H1 (cell line): ENCODE measurements at regions of chr5 and their contacts with region 1.

Region 1: DNA sequence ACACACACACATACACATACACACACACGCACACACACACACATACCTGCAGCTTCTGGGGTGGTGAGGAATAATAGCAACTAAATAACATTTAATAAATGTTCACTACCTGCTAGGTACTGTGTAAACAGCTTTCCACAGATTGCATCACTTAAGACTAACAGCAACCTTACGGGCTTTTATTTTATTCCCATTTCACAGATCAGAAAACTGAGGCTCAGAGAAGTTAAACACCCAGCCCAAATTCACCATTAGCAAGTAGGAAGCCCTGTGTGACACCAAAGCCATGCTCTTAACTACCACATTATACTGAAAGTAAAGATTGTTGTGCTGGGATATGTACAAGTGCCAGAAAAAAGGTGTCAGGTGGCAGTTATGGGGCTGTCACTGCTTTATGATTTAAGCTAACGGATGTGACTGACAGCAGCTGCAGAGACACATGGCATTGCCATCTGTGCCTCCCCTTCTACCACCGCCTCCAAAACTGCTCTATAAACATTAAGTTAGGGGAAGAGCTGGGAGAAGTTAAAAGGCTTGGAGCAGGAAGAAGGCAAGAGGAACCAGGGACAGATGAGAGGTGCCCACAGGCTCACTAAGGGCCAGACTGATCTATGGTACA is 13.6 kb downstream of the MTMR12 start:
- DNase-seq: no peak
- H3K4me3 ChIP-seq: no peak overlapping the region
- H3K27ac ChIP-seq: no peak overlapping the region
- H3K4me1 ChIP-seq: peaks cover 6 to 15% (median 13%) of the 10 kb centered on the region in 4 experiments
- H3K27me3 ChIP-seq: no peaks in the 10 kb centered on the region
- CTCF ChIP-seq: no peak
- EP300 ChIP-seq: no peak
- POLR2A ChIP-seq: no peak
- RAD21 ChIP-seq: no peak

Region 2: GRCh38 chr5:32206509-32207354 is 92.4 kb before region 1 on chr5:
- CTCF ChIA-PET with region 1: no interaction called
- POLR2A ChIA-PET with region 1: no interaction called
- DNase-seq: no peak
- H3K4me3 ChIP-seq: no peak overlapping the region
- H3K27ac ChIP-seq: no peak overlapping the region
- H3K4me1 ChIP-seq: peaks cover 0 to 3% (median 0%) of the 10 kb centered on the region in 4 experiments; a peak in 1 of 7 replicates
- H3K27me3 ChIP-seq: no peaks in the 10 kb centered on the region
- CTCF ChIP-seq: no peak
- EP300 ChIP-seq: no peak
- POLR2A ChIP-seq: no peak
- RAD21 ChIP-seq: no peak

Region 3: GRCh38 chr5:32283539-32284377 is 15.4 kb before region 1 on chr5:
- CTCF ChIA-PET with region 1: interaction called, 5 read pairs
- POLR2A ChIA-PET with region 1: interaction called, 10 read pairs
- DNase-seq: no peak
- H3K4me3 ChIP-seq: no peak overlapping the region
- H3K27ac ChIP-seq: peak overlapping the region; percentile 43; the same call in 1 of the 2 replicates
- H3K4me1 ChIP-seq: peaks cover 4 to 34% (median 19%) of the 10 kb centered on the region in 4 experiments; a peak in 6 of 7 replicates
- H3K27me3 ChIP-seq: no peaks in the 10 kb centered on the region
- CTCF ChIP-seq: no peak
- EP300 ChIP-seq: no peak
- POLR2A ChIP-seq: no peak
- RAD21 ChIP-seq: no peak

Region 4: DNA sequence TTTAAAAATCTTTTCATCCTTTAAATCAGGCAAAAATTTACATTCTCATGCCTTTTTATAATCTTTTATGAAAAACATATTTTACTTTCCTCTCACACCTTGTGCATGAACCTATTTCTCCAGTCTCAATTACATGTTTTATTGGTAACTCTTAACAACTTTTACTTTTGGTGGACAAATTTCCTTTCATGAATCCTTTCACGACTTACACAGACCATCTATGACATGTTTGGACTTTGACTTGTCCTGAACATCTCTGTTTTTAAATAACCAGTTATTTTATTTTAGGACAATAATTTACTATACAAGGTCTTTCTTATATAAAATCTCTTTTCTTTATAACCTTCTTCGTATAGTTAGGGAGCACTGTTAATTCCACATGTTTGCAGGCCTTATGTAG is 40.0 kb after region 1 on chr5:
- CTCF ChIA-PET with region 1: no interaction called
- POLR2A ChIA-PET with region 1: no interaction called
- DNase-seq: no peak
- H3K4me3 ChIP-seq: no peak overlapping the region
- H3K27ac ChIP-seq: no peak overlapping the region
- H3K4me1 ChIP-seq: no peaks in the 10 kb centered on the region
- H3K27me3 ChIP-seq: no peaks in the 10 kb centered on the region
- CTCF ChIP-seq: no peak
- EP300 ChIP-seq: no peak
- POLR2A ChIP-seq: no peak
- RAD21 ChIP-seq: no peak

Region 5: GRCh38 chr5:32413466-32414263 is 114.5 kb after region 1 on chr5:
- CTCF ChIA-PET with region 1: no interaction called
- POLR2A ChIA-PET with region 1: no interaction called
- DNase-seq: no peak
- H3K4me3 ChIP-seq: no peak overlapping the region
- H3K27ac ChIP-seq: no peak overlapping the region
- H3K4me1 ChIP-seq: no peaks in the 10 kb centered on the region
- H3K27me3 ChIP-seq: no peaks in the 10 kb centered on the region
- CTCF ChIP-seq: no peak
- EP300 ChIP-seq: no peak
- POLR2A ChIP-seq: no peak
- RAD21 ChIP-seq: no peak